ENCODE measurements at regions of chr1 and their contacts with region 1.

Region 1: DNA sequence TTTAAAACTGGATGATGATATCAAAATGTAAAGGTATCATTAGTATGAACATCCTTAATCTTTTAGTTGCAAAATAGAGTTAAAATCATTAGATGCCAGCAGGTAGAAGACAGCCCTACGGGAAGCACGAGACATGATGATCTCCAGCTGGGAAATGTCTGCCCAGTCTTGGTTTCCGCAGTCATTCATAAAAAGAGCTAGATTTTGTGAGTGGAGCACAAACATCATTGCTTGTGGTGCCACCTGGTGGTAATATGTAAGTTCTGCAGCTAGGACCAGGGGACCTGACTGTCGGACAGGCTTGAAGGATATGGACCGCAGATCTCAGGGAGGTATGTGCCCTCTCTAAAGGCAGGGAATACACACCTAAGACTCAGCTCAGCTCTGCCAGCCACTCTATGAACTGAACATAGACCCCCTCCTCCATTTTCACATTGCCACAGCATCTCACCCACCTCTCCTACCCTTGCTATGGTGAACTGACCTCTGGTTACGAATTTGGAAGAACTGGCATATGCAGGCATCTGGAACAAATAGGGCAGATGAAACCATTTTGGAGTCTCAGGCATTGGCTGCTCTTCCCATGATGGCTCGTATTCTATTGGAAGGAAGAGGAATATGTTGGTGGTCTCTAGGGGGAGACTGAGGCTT is 9.2 kb downstream of the FCMR start:
- DNase-seq: peak; percentile 26 to 73 (median 67)
- ATAC-seq: peak; percentile 73
- H3K4me3 ChIP-seq: no peak overlapping the region
- H3K4me3 Mint-ChIP-seq: peak overlapping the region in 3 of 10 donors; percentile 67 to 85 (median 75)
- H3K27ac ChIP-seq: peak overlapping the region; percentile 90
- H3K27ac Mint-ChIP-seq: peak overlapping the region in 4 of 9 donors; percentile 83 to 96 (median 92)
- H3K4me1 ChIP-seq: peaks cover 59 to 93% of the 10 kb centered on the region in 2 donors
- H3K4me1 Mint-ChIP-seq: peaks cover 73 to 94% (median 92%) of the 10 kb centered on the region in 7 donors
- H3K27me3 ChIP-seq: no peaks in the 10 kb centered on the region
- H3K27me3 Mint-ChIP-seq: peaks cover 0 to 6% (median 0%) of the 10 kb centered on the region in 5 donors

Region 2: DNA sequence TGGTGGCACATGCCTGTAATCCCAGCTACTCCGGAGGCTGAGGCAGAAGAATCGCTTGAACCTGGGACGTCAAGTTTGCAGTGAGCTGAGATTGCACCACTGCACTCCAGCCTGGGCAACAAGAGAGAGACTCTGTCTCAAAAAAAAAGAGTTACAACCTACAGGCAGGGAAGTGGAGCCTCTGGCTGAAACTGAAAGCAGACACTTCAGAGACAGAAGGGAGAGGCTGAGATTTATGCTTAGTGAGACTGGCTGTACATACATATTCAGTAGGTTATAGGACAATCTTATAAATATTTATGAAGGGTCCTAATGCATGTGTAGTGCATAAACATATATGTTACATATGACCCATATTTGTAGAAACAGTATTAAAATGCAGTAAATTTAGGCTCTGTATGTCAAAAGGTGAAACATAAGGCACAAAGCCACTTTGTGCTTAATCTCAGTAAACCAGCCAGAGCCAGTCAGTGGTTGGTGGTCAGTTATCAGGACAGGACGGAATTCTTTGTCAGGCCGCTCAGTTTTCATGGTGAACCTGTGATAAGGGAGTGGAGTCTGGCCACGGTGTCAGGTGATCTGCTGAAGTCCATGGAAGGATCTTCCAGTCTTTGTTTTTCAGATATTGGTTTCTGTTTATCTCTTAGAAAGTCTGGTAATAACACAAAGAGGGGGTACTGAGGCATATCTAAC is 845.9 kb before region 1 on chr1:
- CTCF ChIA-PET with region 1: no interaction called
- POLR2A ChIA-PET with region 1: no interaction called
- intact Hi-C with region 1: no loop called
- DNase-seq: no peak
- ATAC-seq: peak; percentile 34
- H3K4me3 ChIP-seq: no peak overlapping the region
- H3K4me3 Mint-ChIP-seq: no peak overlapping the region
- H3K27ac ChIP-seq: no peak overlapping the region
- H3K27ac Mint-ChIP-seq: no peak overlapping the region
- H3K4me1 ChIP-seq: no peaks in the 10 kb centered on the region
- H3K4me1 Mint-ChIP-seq: peaks cover 0 to 13% (median 8%) of the 10 kb centered on the region in 7 donors
- H3K27me3 ChIP-seq: no peaks in the 10 kb centered on the region
- H3K27me3 Mint-ChIP-seq: peaks cover 0 to 49% (median 0%) of the 10 kb centered on the region in 5 donors

Region 3: GRCh38 chr1:206513312-206514111 is 399.1 kb before region 1 on chr1:
- CTCF ChIA-PET with region 1: no interaction called
- POLR2A ChIA-PET with region 1: no interaction called
- intact Hi-C with region 1: no loop called
- DNase-seq: no peak
- ATAC-seq: no peak
- H3K4me3 ChIP-seq: no peak overlapping the region
- H3K4me3 Mint-ChIP-seq: no peak overlapping the region
- H3K27ac ChIP-seq: no peak overlapping the region
- H3K27ac Mint-ChIP-seq: no peak overlapping the region
- H3K4me1 ChIP-seq: peaks cover 0 to 1% of the 10 kb centered on the region in 2 donors
- H3K4me1 Mint-ChIP-seq: peaks cover 0 to 31% (median 7%) of the 10 kb centered on the region in 7 donors
- H3K27me3 ChIP-seq: no peaks in the 10 kb centered on the region
- H3K27me3 Mint-ChIP-seq: peaks cover 12 to 17% (median 15%) of the 10 kb centered on the region in 5 donors

Region 4: DNA sequence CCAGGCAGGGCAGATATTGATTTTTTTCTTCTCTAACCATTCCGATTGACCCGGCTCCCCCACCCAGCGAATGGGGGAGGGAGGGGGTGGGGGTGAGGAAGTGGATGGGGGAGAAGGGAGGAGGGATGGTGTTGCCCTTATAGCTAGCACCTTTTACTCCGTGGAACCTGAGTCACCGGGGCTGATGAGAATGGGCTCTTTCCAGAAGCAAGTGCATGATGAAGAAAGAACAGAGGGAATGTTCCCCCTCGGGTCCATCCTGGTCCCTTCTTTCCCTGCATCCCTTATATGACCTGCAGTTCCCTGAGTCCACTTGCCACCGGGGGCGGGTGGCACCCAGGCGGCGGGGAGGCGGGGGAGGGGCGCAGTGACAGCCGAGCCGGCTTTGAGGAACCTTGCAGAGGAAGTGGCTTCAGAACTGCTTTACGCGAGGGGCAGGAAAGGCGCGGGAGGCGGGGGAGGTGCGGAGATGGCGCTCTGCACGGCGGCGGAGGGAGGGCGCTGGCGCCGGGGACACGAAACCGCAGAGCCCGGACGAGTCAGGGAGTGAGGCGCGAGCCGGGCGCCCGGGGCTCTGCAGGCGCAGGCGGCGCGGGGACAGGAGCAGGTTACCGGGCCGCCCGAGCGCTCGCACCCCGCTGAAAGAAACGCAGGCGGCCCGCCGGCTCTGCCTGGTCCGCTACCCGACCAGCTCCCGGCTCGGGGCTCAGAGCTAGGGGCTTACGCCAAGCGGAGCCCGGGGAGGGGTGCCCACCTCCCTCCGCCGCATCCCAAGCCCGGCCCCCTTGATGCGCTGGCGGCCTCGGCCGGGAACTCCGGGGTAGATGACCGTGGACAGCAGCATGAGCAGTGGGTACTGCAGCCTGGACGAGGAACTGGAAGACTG is 355.6 kb before region 1 on chr1:
- CTCF ChIA-PET with region 1: no interaction called
- POLR2A ChIA-PET with region 1: no interaction called
- intact Hi-C with region 1: loop called in 1 of 2 experiments (anchors 5 kb)
- DNase-seq: peak; percentile 78 to 93 (median 88)
- ATAC-seq: peak; percentile 86
- H3K4me3 ChIP-seq: peak overlapping the region; percentile 90
- H3K4me3 Mint-ChIP-seq: peak overlapping the region; percentile 77 to 99 (median 96)
- H3K27ac ChIP-seq: peak overlapping the region; percentile 90
- H3K27ac Mint-ChIP-seq: peak overlapping the region; percentile 86 to 100 (median 94)
- H3K4me1 ChIP-seq: peaks cover 61 to 66% of the 10 kb centered on the region in 2 donors
- H3K4me1 Mint-ChIP-seq: peaks cover 59 to 75% (median 70%) of the 10 kb centered on the region in 7 donors
- H3K27me3 ChIP-seq: no peaks in the 10 kb centered on the region
- H3K27me3 Mint-ChIP-seq: no peaks in the 10 kb centered on the region

Region 5: DNA sequence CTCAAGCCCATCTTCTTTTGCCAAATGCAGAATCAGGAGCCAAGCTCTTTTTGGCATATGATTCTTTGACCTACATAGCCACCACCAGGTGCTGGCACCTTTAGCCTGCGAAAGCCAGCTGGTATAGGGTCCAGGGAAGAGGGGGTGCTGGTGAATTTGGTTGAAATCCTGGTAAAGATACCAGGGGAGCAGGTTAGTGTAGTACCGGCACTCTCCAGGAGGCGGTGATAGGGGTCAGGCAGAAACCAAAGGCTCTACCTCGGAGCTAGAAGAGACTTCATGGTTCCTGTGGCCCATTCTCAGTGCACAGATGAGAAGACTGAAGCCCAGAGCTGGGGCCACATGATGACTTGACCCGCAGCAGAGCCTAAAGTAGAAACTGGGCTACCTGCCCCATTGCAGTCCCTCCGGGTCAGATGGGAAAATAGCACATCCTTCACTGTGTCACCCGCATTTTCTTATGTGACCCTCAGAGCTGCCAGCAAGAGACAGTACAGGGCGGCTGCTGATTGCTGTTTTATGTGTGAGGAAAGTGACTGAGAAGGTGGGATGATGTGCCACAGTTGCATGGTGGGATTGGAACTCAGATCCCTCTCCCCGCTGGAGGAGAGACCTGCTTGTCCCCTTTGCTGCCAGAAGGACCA is 177.9 kb before region 1 on chr1:
- CTCF ChIA-PET with region 1: interaction called, 64 read pairs
- POLR2A ChIA-PET with region 1: interaction called, 60 read pairs
- intact Hi-C with region 1: loop called (anchors 1 kb)
- DNase-seq: peak; percentile 63 to 87 (median 76)
- ATAC-seq: peak; percentile 80
- H3K4me3 ChIP-seq: no peak overlapping the region
- H3K4me3 Mint-ChIP-seq: peak overlapping the region in 4 of 10 donors; percentile 7 to 54 (median 26)
- H3K27ac ChIP-seq: no peak overlapping the region
- H3K27ac Mint-ChIP-seq: peak overlapping the region; percentile 53 to 95 (median 87)
- H3K4me1 ChIP-seq: peaks cover 49 to 50% of the 10 kb centered on the region in 2 donors
- H3K4me1 Mint-ChIP-seq: peaks cover 40 to 60% (median 56%) of the 10 kb centered on the region in 7 donors
- H3K27me3 ChIP-seq: no peaks in the 10 kb centered on the region
- H3K27me3 Mint-ChIP-seq: no peaks in the 10 kb centered on the region

Region 6: GRCh38 chr1:206808615-206809014 is 104.0 kb before region 1 on chr1:
- CTCF ChIA-PET with region 1: interaction called, 65 read pairs
- POLR2A ChIA-PET with region 1: interaction called, 14 read pairs
- intact Hi-C with region 1: loop called (anchors 1 kb)
- DNase-seq: peak in 7 of 9 donors; percentile 47 to 71 (median 58)
- ATAC-seq: peak; percentile 90
- H3K4me3 ChIP-seq: no peak overlapping the region
- H3K4me3 Mint-ChIP-seq: peak overlapping the region in 1 of 10 donors; percentile 8
- H3K27ac ChIP-seq: no peak overlapping the region
- H3K27ac Mint-ChIP-seq: peak overlapping the region in 8 of 9 donors; percentile 17 to 76 (median 51)
- H3K4me1 ChIP-seq: peaks cover 30 to 42% of the 10 kb centered on the region in 2 donors
- H3K4me1 Mint-ChIP-seq: peaks cover 24 to 61% (median 52%) of the 10 kb centered on the region in 7 donors
- H3K27me3 ChIP-seq: no peaks in the 10 kb centered on the region
- H3K27me3 Mint-ChIP-seq: peaks cover 0 to 12% (median 0%) of the 10 kb centered on the region in 5 donors

Region 7: DNA sequence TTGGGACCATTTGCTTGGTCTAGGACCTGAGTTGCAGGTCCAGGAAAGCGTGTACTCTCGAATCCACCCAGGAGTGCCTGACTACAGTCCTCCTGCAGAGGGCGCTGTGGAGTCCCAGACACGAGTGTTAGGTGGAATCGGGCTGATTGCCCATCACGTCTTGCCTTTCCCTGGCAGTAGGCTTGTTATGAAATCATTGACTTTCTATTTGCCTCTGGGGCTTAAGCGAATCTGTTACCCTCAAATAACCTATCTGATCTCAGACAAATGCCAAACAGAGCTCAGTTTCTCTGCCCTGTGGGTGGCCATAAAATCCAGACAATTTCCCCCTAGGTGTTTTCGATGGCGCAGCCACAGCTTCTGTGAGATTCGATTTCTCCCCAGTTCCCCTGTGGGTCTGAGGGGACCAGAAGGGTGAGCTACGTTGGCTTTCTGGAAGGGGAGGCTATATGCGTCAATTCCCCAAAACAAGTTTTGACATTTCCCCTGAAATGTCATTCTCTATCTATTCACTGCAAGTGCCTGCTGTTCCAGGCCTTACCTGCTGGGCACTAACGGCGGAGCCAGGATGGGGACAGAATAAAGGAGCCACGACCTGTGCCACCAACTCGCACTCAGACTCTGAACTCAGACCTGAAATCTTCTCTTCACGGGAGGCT is 47.4 kb before region 1 on chr1 and contains the start of gene IL20:
- CTCF ChIA-PET with region 1: interaction called, 50 read pairs
- POLR2A ChIA-PET with region 1: interaction called, 42 read pairs
- intact Hi-C with region 1: loop called (anchors 1 kb)
- DNase-seq: peak; percentile 71 to 92 (median 84)
- ATAC-seq: peak; percentile 97
- H3K4me3 ChIP-seq: no peak within 1 kb of the TSS
- H3K4me3 Mint-ChIP-seq: peak within 1 kb of the TSS in 2 of 10 donors; percentile 3 to 5
- H3K27ac ChIP-seq: no peak within 1 kb of the TSS
- H3K27ac Mint-ChIP-seq: peak within 1 kb of the TSS in 6 of 9 donors; percentile 7 to 53 (median 28)
- H3K4me1 ChIP-seq: no peaks in the 10 kb centered on the region
- H3K4me1 Mint-ChIP-seq: peaks cover 3 to 16% (median 7%) of the 10 kb centered on the region in 7 donors
- H3K27me3 ChIP-seq: no peaks in the 10 kb centered on the region
- H3K27me3 Mint-ChIP-seq: peaks cover 0 to 56% (median 0%) of the 10 kb centered on the region in 5 donors
- total RNA-seq, gene IL20: not detected

Region 8: DNA sequence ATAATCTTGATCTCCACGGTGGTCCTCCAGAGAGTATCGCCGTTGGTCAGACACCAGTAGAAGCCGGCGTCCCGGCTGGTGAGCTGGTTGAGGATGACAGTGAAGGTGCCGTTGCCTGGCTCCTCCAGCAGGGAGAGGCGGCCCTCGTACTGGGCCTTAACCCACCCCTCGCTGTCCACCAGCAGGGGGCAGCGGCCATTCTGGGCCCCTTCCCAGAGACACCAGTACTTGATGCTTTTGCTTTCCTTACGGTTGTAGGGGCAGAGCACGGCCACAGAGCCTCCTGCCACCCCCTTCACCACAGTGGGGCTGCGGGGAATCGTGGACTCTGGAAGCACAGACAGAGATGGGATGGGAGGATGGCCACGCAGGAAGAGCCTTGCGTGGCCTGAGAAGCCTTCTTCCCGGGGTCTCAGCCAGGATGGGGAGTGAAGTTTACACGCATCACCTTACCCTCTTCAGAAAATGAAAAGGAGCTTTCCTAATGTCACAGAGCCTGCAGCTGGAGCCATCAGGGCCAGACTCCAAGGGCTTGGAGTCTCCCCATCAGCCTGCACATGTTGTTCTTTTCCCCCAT is 23.0 kb after region 1 on chr1:
- CTCF ChIA-PET with region 1: interaction called, 343 read pairs
- POLR2A ChIA-PET with region 1: interaction called, 323 read pairs
- intact Hi-C with region 1: loop called in 1 of 2 experiments (anchors 1 kb)
- DNase-seq: peak in 4 of 9 donors; percentile 28 to 56 (median 48)
- ATAC-seq: peak; percentile 68
- H3K4me3 ChIP-seq: no peak overlapping the region
- H3K4me3 Mint-ChIP-seq: no peak overlapping the region
- H3K27ac ChIP-seq: no peak overlapping the region
- H3K27ac Mint-ChIP-seq: peak overlapping the region in 1 of 9 donors; percentile 12
- H3K4me1 ChIP-seq: peaks cover 6 to 12% of the 10 kb centered on the region in 2 donors
- H3K4me1 Mint-ChIP-seq: peaks cover 2 to 31% (median 29%) of the 10 kb centered on the region in 7 donors
- H3K27me3 ChIP-seq: no peaks in the 10 kb centered on the region
- H3K27me3 Mint-ChIP-seq: peaks cover 0 to 8% (median 0%) of the 10 kb centered on the region in 5 donors

Measured in naive thymus-derived CD4-positive, alpha-beta T cell (primary cell).